ENCODE measurements at regions of chr17 and their contacts with region 1.

Region 1: GRCh38 chr17:75539967-75540711 is 14.6 kb downstream of the LLGL2 start:
- DNase-seq: no peak
- ATAC-seq: peak; percentile 16 to 22; a peak in 4 of 6 replicates
- H3K4me3 ChIP-seq: no peak overlapping the region
- H3K27ac ChIP-seq: peak overlapping the region in 1 of 2 experiments; percentile 68; a peak in 3 of 6 replicates
- H3K4me1 ChIP-seq: peaks cover 18% of the 10 kb centered on the region
- CTCF ChIP-seq: no peak
- EP300 ChIP-seq: no peak
- POLR2A ChIP-seq: no peak
- RAD21 ChIP-seq: no peak

Region 2: GRCh38 chr17:75524953-75525719 is 15.0 kb before region 1 on chr17 and contains the start of gene LLGL2:
- CTCF ChIA-PET with region 1: interaction called, 14 read pairs
- POLR2A ChIA-PET with region 1: interaction called, 5 read pairs
- DNase-seq: peak; percentile 83 to 93
- ATAC-seq: peak; percentile 85 to 90
- H3K4me3 ChIP-seq: peak within 1 kb of the TSS; percentile 67
- H3K27ac ChIP-seq: peak within 1 kb of the TSS; percentile 83 to 88
- H3K4me1 ChIP-seq: peaks cover 21% of the 10 kb centered on the region
- CTCF ChIP-seq: peak; percentile 69
- EP300 ChIP-seq: no peak
- POLR2A ChIP-seq: no peak
- RAD21 ChIP-seq: peak; percentile 18 to 59; a peak in 4 of 5 replicates
- polyA plus RNA-seq, gene LLGL2: 18.9 and 20.7 TPM in 2 replicates

Measured in A549 (cell line).